Right ventricle myocardium inferior (tissue), 1 donor: ENCODE measurements at regions of chr2 and their contacts with region 1.

Region 1: DNA sequence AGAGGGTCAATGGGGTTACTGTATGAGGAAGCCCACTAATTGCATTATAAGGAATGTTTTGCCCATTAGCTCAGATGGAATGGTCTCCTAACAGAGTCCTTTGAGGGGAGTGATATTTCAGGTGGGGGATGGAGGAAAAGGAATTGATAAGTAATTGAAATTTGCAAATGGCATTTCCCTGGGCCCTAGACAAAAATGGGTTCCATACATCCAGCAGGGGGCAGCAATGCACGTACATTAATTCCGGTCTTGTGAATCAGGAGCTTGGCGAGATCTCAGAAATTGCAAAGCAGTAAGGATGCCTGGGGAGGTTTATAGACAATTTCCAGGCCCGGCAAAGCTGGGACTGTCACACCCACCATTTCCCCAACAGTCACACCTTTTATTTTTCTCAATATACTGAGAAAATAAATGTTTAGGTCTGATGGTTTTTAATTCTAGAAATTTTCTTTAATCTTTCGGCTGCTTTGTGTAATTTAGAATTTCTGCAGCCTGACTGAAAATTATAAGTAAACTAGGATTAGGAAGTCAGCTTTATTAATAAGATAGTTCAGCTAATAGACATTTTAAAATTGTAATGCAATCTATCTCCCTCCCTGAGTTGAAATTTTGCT is 122.8 kb downstream of the LYPD1 start:
- DNase-seq: no peak
- ATAC-seq: no peak

Region 2: DNA sequence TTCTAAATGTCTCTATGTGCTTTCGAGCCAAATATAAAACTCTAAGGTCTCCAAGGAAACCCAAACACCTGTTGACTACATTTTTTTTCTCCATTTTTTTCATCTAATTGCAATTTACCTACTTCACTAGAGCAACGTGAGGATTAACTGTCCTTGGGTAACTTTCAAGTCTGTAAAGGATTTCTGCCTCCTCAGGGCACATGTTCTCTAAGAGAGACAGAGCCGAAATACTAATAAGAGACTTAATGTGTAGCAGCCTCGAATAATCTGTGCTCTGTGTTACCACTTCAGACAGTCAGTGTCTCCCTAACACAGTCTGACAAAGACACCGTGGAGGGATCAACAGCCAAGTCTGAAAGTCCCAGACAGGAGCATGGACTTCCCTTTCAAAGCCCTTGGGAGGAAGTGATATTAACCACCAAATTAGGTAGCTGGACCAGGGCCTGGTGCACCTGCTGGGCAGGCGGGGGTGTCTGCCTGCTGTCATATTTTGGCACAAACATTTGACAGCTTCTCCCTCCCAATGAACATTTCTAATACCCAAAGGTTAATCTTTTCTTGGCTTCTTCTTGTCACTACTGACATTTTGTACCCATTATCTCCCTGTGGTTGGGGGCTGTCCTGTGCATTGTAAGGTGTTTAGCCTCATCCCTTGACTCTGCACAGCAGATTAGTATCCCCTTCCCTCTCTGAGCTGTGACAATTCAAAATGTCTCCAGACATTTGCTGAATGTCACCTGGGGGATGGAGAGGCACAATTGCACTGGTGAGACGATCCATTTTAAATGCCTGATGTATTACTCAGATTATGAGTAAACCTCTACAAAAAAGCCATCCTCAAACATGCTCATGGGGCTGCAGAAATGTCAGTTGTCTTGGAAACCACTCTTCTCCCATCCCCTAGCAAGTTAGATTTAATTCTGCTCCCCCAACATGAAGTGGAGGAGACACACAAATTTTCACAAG is 168.5 kb after region 1 on chr2:
- intact Hi-C with region 1: no loop called
- DNase-seq: no peak
- ATAC-seq: no peak

Region 3: DNA sequence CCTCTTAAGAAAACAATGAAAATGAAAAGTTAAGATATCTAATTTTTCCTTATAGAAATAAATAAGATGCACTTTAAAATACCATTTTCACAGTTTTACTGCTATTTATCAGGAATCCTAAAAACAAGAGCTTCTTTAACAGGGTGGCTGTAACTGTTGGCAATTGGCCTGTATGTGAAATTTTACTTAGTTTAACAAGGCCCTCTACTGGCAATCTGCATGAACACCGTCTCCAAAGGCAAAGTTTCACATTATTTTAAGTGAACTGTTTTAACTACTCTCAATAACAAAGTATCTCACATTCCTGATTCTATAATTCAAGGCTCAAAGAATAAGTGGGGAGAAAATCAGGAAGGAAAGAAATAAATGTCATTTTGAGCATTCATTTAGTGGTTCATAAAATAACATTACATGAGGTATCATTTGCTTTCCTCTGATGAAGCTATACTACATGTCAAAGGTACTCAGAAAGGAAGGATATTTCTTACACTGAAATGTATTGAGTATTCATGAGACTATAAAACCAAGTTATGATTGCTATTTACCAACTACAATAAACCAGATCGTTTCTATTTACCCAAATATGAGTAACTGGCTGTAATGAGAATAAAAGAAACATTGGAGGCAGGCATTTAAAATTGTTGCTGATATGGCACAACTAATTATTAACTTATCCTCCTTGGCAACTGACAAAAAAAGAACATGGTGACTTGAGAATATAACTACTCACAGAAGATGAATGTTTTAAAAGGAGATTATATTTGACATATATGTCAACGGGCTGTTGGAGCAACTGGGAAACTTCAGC is 1014.1 kb after region 1 on chr2:
- intact Hi-C with region 1: loop called (anchors 5 kb)
- DNase-seq: no peak
- ATAC-seq: no peak

Region 4: GRCh38 chr2:133780099-133780839 is 1233.1 kb after region 1 on chr2:
- intact Hi-C with region 1: loop called (anchors 5 kb)
- DNase-seq: no peak
- ATAC-seq: peak; percentile 63

Region 5: DNA sequence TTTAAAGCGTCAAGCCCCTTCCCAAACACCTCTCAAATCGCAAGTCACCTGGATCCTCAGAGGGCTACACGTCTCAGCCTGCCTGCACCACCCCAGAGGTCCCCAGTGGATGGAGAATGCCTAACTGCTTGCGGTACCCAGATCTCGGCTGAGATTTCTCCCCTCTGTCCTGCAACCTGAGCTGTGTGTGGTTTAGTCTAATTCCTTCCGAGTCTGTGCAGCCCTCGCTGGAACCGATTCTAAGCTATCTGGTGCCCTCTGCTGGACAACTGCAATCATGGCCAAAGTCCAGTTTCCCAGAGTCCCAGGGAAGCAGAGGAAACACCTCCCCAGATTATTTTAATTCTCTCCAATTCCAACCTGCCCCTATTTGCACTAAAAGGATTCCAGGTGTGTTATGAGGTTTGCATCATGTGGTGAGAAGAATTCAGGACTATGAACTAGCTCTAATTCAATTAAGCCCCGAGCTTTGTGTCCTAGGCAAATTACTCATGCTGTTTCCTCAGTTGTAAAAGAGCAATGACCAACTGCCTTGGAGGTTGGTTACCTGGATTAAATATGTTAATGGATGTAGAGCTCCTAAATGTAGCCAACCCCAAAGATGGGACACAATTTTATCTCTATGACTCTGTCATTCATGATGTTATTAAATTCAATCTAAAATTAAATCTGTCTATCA is 1297.2 kb after region 1 on chr2:
- intact Hi-C with region 1: loop called (anchors 5 kb)
- DNase-seq: no peak
- ATAC-seq: peak; percentile 54